ENCODE measurements at regions of chr7 and their contacts with region 1.

Region 1: GRCh38 chr7:96321658-96322372 is at the start of gene SLC25A13:
- DNase-seq: peak; percentile 80
- ATAC-seq: peak; percentile 72
- H3K4me3 ChIP-seq: peak within 1 kb of the TSS; percentile 67 to 92 (median 79)
- H3K4me3 Mint-ChIP-seq: peak within 1 kb of the TSS; percentile 86
- H3K27ac ChIP-seq: peak within 1 kb of the TSS; percentile 85 to 87
- H3K27ac Mint-ChIP-seq: peak within 1 kb of the TSS; percentile 88
- H3K4me1 ChIP-seq: peaks cover 17 to 20% of the 10 kb centered on the region in 2 donors
- H3K4me1 Mint-ChIP-seq: peaks cover 42% of the 10 kb centered on the region
- H3K27me3 ChIP-seq: no peaks in the 10 kb centered on the region
- H3K27me3 Mint-ChIP-seq: no peaks in the 10 kb centered on the region
- CTCF ChIP-seq: no peak
- total RNA-seq, gene SLC25A13: 30.9 and 39.6 TPM in 2 replicates

Region 2: GRCh38 chr7:94509879-94510581 is 1811.8 kb before region 1 on chr7:
- CTCF ChIA-PET with region 1: no interaction called
- POLR2A ChIA-PET with region 1: no interaction called
- intact Hi-C with region 1: loop called (anchors 5 kb)
- DNase-seq: peak; percentile 88
- ATAC-seq: peak; percentile 76
- H3K4me3 ChIP-seq: peak overlapping the region; percentile 31 to 80 (median 73)
- H3K4me3 Mint-ChIP-seq: peak overlapping the region; percentile 88
- H3K27ac ChIP-seq: peak overlapping the region; percentile 77 to 92
- H3K27ac Mint-ChIP-seq: peak overlapping the region; percentile 93
- H3K4me1 ChIP-seq: peaks cover 18 to 20% of the 10 kb centered on the region in 2 donors
- H3K4me1 Mint-ChIP-seq: peaks cover 46% of the 10 kb centered on the region
- H3K27me3 ChIP-seq: no peaks in the 10 kb centered on the region
- H3K27me3 Mint-ChIP-seq: no peaks in the 10 kb centered on the region
- CTCF ChIP-seq: peak; percentile 5

Region 3: DNA sequence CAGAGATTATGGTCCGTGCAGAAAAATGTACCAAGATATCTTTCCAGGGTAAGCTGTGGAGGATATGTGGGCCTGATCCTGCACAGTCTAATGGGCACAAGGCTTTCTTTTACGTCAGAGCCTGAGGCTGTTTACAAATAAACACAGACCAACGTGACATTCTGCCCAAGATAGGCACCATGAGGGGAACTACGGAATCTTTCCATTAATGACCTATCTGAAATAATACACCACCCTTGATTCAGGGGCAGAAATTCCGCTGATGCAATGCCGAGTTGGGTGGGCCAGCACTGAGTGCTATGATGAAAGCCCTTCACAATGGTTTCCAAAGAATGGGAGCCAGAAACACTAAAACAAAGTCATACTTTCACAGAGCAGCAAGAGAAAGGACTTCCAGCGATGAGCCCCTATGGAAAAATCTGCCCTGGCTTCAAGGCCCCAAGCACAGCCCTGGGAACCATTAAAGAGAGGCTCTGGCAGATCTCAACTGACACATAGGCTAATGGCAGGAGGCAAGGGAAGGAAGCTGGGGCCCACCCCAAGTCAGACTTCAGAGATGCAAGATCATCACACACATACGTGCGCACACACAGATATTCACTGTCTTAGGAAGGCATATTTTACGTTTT is 611.3 kb after region 1 on chr7:
- CTCF ChIA-PET with region 1: no interaction called
- POLR2A ChIA-PET with region 1: no interaction called
- intact Hi-C with region 1: no loop called
- DNase-seq: no peak
- ATAC-seq: no peak
- H3K4me3 ChIP-seq: no peak overlapping the region
- H3K4me3 Mint-ChIP-seq: no peak overlapping the region
- H3K27ac ChIP-seq: no peak overlapping the region
- H3K27ac Mint-ChIP-seq: no peak overlapping the region
- H3K4me1 ChIP-seq: no peaks in the 10 kb centered on the region
- H3K4me1 Mint-ChIP-seq: no peaks in the 10 kb centered on the region
- H3K27me3 ChIP-seq: no peaks in the 10 kb centered on the region
- H3K27me3 Mint-ChIP-seq: no peaks in the 10 kb centered on the region
- CTCF ChIP-seq: no peak

Measured in B cell (primary cell).